Naive thymus-derived CD4-positive, alpha-beta T cell (primary cell): ENCODE measurements at regions of chr16 and their contacts with region 1.

Region 1: GRCh38 chr16:57648590-57649442 is 19.3 kb upstream of the ADGRG3 start:
- DNase-seq: peak; percentile 63 to 90 (median 80)
- ATAC-seq: peak; percentile 90
- H3K4me3 ChIP-seq: no peak overlapping the region
- H3K4me3 Mint-ChIP-seq: peak overlapping the region in 2 of 10 donors; percentile 7 to 77
- H3K27ac ChIP-seq: no peak overlapping the region
- H3K27ac Mint-ChIP-seq: peak overlapping the region in 5 of 9 donors; percentile 11 to 66 (median 59)
- H3K4me1 ChIP-seq: peaks cover 0 to 29% of the 10 kb centered on the region in 2 donors
- H3K4me1 Mint-ChIP-seq: peaks cover 6 to 33% (median 15%) of the 10 kb centered on the region in 7 donors
- H3K27me3 ChIP-seq: no peaks in the 10 kb centered on the region
- H3K27me3 Mint-ChIP-seq: no peaks in the 10 kb centered on the region

Region 2: GRCh38 chr16:57447186-57447962 is 201.4 kb before region 1 on chr16 and contains the starts of genes CIAPIN1 and COQ9:
- CTCF ChIA-PET with region 1: no interaction called
- POLR2A ChIA-PET with region 1: no interaction called
- intact Hi-C with region 1: no loop called
- DNase-seq: peak; percentile 83 to 94 (median 88)
- ATAC-seq: peak; percentile 99
- H3K4me3 ChIP-seq: peak within 1 kb of the TSS; percentile 84
- H3K4me3 Mint-ChIP-seq: peak within 1 kb of the TSS; percentile 90 to 97 (median 92)
- H3K27ac ChIP-seq: peak within 1 kb of the TSS; percentile 87
- H3K27ac Mint-ChIP-seq: peak within 1 kb of the TSS; percentile 75 to 96 (median 90)
- H3K4me1 ChIP-seq: peaks cover 7 to 17% of the 10 kb centered on the region in 2 donors
- H3K4me1 Mint-ChIP-seq: peaks cover 15 to 64% (median 45%) of the 10 kb centered on the region in 7 donors
- H3K27me3 ChIP-seq: no peaks in the 10 kb centered on the region
- H3K27me3 Mint-ChIP-seq: no peaks in the 10 kb centered on the region
- total RNA-seq, gene CIAPIN1: 33.6 to 52.8 (median 35.8) TPM
- total RNA-seq, gene COQ9: 16.4 to 45.4 (median 36.6) TPM

Region 3: GRCh38 chr16:57600048-57600835 is 48.6 kb before region 1 on chr16:
- CTCF ChIA-PET with region 1: interaction called, 6 read pairs
- POLR2A ChIA-PET with region 1: no interaction called
- intact Hi-C with region 1: loop called (anchors 2 kb)
- DNase-seq: no peak
- ATAC-seq: peak; percentile 30
- H3K4me3 ChIP-seq: no peak overlapping the region
- H3K4me3 Mint-ChIP-seq: no peak overlapping the region
- H3K27ac ChIP-seq: no peak overlapping the region
- H3K27ac Mint-ChIP-seq: peak overlapping the region in 2 of 9 donors; percentile 28 to 60
- H3K4me1 ChIP-seq: peaks cover 24 to 46% of the 10 kb centered on the region in 2 donors
- H3K4me1 Mint-ChIP-seq: peaks cover 16 to 56% (median 28%) of the 10 kb centered on the region in 7 donors
- H3K27me3 ChIP-seq: no peaks in the 10 kb centered on the region
- H3K27me3 Mint-ChIP-seq: peaks cover 0 to 2% (median 0%) of the 10 kb centered on the region in 5 donors

Region 4: DNA sequence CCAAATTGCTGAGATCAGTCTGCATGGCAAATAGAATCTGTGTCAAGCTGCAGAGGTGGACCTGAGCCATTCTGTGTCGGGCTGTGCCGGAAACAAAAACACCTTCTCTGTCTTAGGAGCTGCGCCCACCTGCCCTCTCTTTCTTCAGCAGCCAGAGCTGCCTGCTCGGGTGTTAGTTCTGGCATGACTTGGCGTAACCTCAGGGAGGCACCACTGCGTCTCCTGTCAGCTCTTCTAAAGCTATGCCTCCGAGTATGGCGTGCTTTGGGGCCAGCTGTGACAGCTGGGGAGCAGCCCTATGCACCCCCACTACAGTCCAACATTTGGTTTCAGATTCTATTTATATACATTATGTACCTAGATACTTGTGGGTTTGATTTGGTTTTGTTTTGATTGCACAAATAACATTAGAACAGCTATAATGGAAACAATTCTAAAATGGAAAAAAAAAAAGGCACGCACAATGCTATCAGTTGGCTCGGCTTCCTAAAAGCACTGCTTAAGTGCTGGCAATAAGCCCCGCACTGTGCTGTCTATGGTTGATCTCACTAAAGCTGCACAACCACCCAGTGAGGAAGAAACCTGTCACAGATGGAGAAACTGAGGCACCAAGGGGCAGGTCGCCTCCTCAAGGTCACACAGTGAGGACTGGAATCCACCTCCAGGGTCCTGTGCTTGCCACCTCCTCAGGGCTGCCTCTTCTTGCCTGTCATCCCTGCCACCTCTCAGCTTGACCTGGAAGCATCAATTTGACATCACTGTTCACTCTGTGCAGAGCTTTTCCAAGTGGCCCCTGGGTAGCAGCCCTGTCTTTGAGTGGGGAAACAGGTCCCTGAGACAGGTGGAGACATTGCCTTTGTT is 39.0 kb before region 1 on chr16:
- CTCF ChIA-PET with region 1: interaction called, 7 read pairs
- POLR2A ChIA-PET with region 1: no interaction called
- intact Hi-C with region 1: loop called in 1 of 2 experiments (anchors 1 kb)
- DNase-seq: peak in 7 of 9 donors; percentile 29 to 74 (median 35)
- ATAC-seq: peak; percentile 91
- H3K4me3 ChIP-seq: peak overlapping the region; percentile 38
- H3K4me3 Mint-ChIP-seq: peak overlapping the region; percentile 38 to 84 (median 62)
- H3K27ac ChIP-seq: no peak overlapping the region
- H3K27ac Mint-ChIP-seq: peak overlapping the region in 8 of 9 donors; percentile 20 to 91 (median 52)
- H3K4me1 ChIP-seq: peaks cover 10 to 42% of the 10 kb centered on the region in 2 donors
- H3K4me1 Mint-ChIP-seq: peaks cover 11 to 47% (median 13%) of the 10 kb centered on the region in 7 donors
- H3K27me3 ChIP-seq: no peaks in the 10 kb centered on the region
- H3K27me3 Mint-ChIP-seq: no peaks in the 10 kb centered on the region

Region 5: DNA sequence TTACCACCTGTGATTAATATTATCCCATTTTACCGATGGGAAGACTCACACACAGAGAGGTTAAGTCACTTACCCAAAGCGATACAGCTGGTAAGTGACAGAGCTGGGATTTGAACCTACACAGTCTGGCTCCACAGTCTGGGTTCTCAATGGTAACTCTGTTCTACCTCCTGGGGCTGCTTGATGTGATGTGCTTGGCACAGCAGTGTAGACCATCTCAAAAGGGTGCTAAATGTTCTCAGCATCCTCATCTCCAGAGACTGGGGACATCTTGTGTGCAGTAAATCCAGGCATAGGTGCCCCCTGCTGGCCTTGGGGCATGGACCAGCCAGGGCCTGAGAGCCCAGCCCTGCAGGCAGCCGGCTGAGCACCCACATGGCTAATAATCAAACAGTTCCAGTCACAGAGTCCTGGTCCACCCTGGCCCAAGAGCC is 71.3 kb after region 1 on chr16:
- CTCF ChIA-PET with region 1: interaction called, 3 read pairs
- POLR2A ChIA-PET with region 1: no interaction called
- intact Hi-C with region 1: loop called in 1 of 2 experiments (anchors 1 kb)
- DNase-seq: peak in 5 of 9 donors; percentile 21 to 40 (median 25)
- ATAC-seq: peak; percentile 75
- H3K4me3 ChIP-seq: no peak overlapping the region
- H3K4me3 Mint-ChIP-seq: no peak overlapping the region
- H3K27ac ChIP-seq: no peak overlapping the region
- H3K27ac Mint-ChIP-seq: no peak overlapping the region
- H3K4me1 ChIP-seq: no peaks in the 10 kb centered on the region
- H3K4me1 Mint-ChIP-seq: no peaks in the 10 kb centered on the region
- H3K27me3 ChIP-seq: no peaks in the 10 kb centered on the region
- H3K27me3 Mint-ChIP-seq: peaks cover 0 to 2% (median 0%) of the 10 kb centered on the region in 5 donors

Region 6: DNA sequence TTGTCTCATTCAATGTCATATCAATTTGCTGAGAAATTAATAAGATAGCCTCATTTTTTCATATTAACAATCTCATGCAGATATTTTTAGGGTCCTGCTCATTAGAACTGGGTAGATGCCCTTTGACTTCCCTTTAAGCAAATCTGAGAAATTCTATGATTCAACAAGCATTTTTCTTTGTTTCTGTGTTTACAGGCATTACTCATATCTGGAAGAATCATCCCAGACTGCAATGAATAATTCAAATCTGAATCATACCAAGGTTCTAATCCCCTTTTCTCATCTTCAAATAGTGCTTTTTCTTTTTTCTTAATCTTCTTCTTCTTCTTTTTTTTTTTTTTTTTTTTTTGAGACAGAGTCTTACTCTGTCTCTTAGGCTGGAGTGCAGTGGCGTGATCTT is 222.6 kb after region 1 on chr16:
- CTCF ChIA-PET with region 1: no interaction called
- POLR2A ChIA-PET with region 1: no interaction called
- intact Hi-C with region 1: no loop called
- DNase-seq: no peak
- ATAC-seq: no peak
- H3K4me3 ChIP-seq: no peak overlapping the region
- H3K4me3 Mint-ChIP-seq: no peak overlapping the region
- H3K27ac ChIP-seq: no peak overlapping the region
- H3K27ac Mint-ChIP-seq: no peak overlapping the region
- H3K4me1 ChIP-seq: no peaks in the 10 kb centered on the region
- H3K4me1 Mint-ChIP-seq: no peaks in the 10 kb centered on the region
- H3K27me3 ChIP-seq: no peaks in the 10 kb centered on the region
- H3K27me3 Mint-ChIP-seq: peaks cover 0 to 24% (median 13%) of the 10 kb centered on the region in 5 donors